Activated B cell treated with CpG ODN at 0.5 μM for 24 hours (primary cell): ENCODE measurements at regions of chr5 and their contacts with region 1.

Region 1: GRCh38 chr5:82641331-82642003 is 363.3 kb upstream of the RPS23 start:
- DNase-seq: no peak
- ATAC-seq: no peak
- H3K4me3 Mint-ChIP-seq: no peak overlapping the region
- H3K27ac Mint-ChIP-seq: no peak overlapping the region
- H3K4me1 Mint-ChIP-seq: no peaks in the 10 kb centered on the region
- H3K27me3 Mint-ChIP-seq: no peaks in the 10 kb centered on the region
- CTCF ChIP-seq: peak; percentile 14

Region 2: GRCh38 chr5:83473346-83474163 is 832.1 kb after region 1 on chr5:
- CTCF ChIA-PET with region 1: no interaction called
- POLR2A ChIA-PET with region 1: no interaction called
- intact Hi-C with region 1: loop called (anchors 1 kb)
- DNase-seq: peak; percentile 33
- ATAC-seq: peak; percentile 56
- H3K4me3 Mint-ChIP-seq: peak overlapping the region; percentile 76
- H3K27ac Mint-ChIP-seq: no peak overlapping the region
- H3K4me1 Mint-ChIP-seq: peaks cover 38% of the 10 kb centered on the region
- H3K27me3 Mint-ChIP-seq: peaks cover 58% of the 10 kb centered on the region
- CTCF ChIP-seq: no peak

Region 3: GRCh38 chr5:83564069-83564749 is 922.7 kb after region 1 on chr5:
- CTCF ChIA-PET with region 1: interaction called, 7 read pairs
- POLR2A ChIA-PET with region 1: no interaction called
- intact Hi-C with region 1: loop called (anchors 1 kb)
- DNase-seq: no peak
- ATAC-seq: no peak
- H3K4me3 Mint-ChIP-seq: no peak overlapping the region
- H3K27ac Mint-ChIP-seq: no peak overlapping the region
- H3K4me1 Mint-ChIP-seq: no peaks in the 10 kb centered on the region
- H3K27me3 Mint-ChIP-seq: peaks cover 7% of the 10 kb centered on the region
- CTCF ChIP-seq: peak; percentile 71